PC-9 (cell line): ENCODE measurements at regions of chr2 and their contacts with region 1.

Region 1: DNA sequence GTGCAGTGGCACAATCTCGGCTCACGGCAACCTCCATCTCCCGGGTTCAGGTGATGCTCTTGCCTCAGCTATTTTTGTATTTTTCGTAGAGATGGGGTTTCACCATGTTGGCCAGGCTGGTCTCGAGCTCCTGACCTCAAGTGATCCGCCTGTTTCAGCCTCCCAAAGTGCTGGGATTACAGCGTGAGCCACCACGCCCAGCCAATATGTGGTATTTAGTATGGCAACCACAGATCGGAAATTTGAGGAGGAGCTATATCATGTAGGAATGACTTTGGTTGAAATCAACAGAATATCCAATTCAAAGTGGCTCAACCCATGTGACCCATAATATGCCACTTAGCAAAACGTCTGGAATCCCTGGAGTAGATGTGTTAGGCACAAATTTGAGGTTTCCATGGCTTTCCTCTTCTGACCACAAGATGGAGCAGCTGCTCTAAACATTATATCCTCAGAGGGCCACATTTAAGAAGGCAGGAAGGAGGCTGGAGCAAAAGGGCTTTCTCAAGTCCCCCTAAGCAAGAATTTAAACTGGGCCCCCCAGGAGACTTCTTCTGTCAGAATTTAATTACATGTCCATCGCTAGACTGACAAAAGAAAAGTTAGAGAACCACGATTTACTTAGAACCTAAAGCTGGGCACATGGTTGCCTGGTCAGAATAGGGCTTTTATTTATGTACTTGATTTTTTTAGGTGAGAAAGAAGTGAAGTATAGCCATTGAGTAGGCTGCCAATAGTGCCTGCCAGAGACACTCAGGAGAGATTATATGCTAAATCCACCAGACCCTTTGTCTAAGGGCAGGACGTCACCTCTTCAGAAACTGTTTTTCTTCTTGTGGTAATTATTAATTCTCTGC is 49.6 kb upstream of the ITSN2 start:
- DNase-seq: peak; percentile 38 to 58
- H3K4me3 ChIP-seq: no peak overlapping the region
- H3K27ac ChIP-seq: no peak overlapping the region
- H3K4me1 ChIP-seq: peaks cover 11% of the 10 kb centered on the region
- H3K27me3 ChIP-seq: no peaks in the 10 kb centered on the region
- CTCF ChIP-seq: peak; percentile 92

Region 2: DNA sequence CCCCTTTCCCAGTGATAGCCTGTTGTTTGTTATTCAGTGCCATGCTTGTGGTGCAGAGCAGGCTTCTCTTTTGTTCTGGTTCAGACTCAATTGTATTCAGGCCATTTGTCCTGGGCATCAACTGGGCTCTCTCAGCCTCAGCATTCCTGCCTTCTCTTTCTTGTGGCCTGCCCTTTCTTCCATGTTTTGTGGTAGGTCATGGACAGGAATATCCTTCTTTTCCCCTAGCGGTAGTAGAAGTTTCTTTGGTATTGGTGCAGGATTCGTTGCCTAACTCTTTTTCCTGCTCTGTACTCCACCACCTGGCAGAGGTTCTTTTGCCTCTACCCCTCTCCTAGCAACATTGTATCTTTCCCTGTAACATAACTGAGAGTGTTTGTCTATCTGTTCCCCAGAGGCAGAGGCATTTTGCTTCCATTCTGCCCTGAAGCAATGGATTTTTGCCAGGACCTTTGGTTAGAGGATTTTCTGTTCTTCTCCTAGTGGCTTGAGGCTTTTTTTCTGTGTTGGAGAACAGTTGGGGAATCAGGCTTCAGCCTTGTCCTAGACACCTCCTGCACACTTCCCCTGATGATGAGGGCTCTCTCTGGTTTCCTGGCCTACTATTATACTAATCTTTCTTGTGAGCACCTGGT is 149.7 kb after region 1 on chr2:
- CTCF ChIA-PET with region 1: no interaction called
- POLR2A ChIA-PET with region 1: no interaction called
- intact Hi-C with region 1: loop called (anchors 10 kb)
- DNase-seq: no peak
- H3K4me3 ChIP-seq: no peak overlapping the region
- H3K27ac ChIP-seq: no peak overlapping the region
- H3K4me1 ChIP-seq: no peaks in the 10 kb centered on the region
- H3K27me3 ChIP-seq: no peaks in the 10 kb centered on the region
- CTCF ChIP-seq: no peak